ENCODE measurements at regions of chr19 and their contacts with region 1.

Region 1: GRCh38 chr19:10580979-10581631 is 6.0 kb downstream of the AP1M2 start:
- DNase-seq: peak; percentile 73 to 94 (median 88)
- ATAC-seq: peak; percentile 91 to 98 (median 95)
- H3K4me3 ChIP-seq: peak overlapping the region in 1 of 2 donors; percentile 3
- H3K4me3 Mint-ChIP-seq: no peak overlapping the region
- H3K27ac ChIP-seq: no peak overlapping the region
- H3K27ac Mint-ChIP-seq: peak overlapping the region in 1 of 2 donors; percentile 34
- H3K4me1 ChIP-seq: peaks cover 0 to 19% of the 10 kb centered on the region in 2 experiments
- H3K4me1 Mint-ChIP-seq: peaks cover 11 to 14% (median 14%) of the 10 kb centered on the region in 3 donors
- H3K27me3 ChIP-seq: peaks cover 0 to 9% of the 10 kb centered on the region in 2 experiments
- H3K27me3 Mint-ChIP-seq: peaks cover 0 to 1% of the 10 kb centered on the region in 2 donors

Region 2: DNA sequence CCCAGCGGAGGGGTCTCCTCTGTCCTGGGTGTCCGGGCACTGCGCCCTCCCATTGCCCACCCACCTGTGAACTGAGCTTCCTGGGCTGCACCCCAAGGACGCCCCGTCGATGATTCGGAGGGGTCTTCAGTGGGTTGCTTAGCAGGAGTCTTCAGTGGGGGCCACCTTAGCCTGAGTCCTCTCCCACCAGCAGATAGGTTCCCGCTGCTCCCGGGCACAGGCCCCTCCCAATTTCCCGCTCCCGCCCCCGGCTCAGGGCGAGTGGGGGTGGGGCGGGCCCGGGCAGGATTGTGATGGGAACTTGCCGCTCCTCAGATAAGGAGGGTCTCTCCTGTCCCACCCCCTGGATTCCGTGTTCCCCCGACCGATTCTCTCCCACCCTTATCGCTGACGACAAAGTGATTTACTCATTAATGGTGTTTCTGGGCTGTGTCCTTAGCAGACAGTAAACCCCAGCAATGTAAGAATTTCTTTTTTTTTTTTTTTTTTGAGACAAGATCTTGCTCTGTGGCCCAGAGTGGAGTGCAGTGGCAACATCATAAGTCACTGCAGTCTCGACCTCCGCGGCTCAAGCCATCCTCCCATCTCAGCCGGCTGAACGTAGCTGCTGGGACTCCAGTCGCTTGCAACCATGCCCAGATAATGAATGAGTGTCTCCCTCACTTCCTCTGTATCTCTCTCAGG is 63.2 kb before region 1 on chr19:
- CTCF ChIA-PET with region 1: no interaction called
- POLR2A ChIA-PET with region 1: no interaction called
- DNase-seq: peak in 9 of 35 experiments; percentile 24 to 67 (median 29)
- ATAC-seq: peak; percentile 25 to 56 (median 34)
- H3K4me3 ChIP-seq: peak overlapping the region; percentile 56 to 67
- H3K4me3 Mint-ChIP-seq: peak overlapping the region; percentile 71 to 84 (median 72)
- H3K27ac ChIP-seq: peak overlapping the region; percentile 72
- H3K27ac Mint-ChIP-seq: peak overlapping the region in 1 of 2 donors; percentile 66
- H3K4me1 ChIP-seq: peaks cover 17 to 85% of the 10 kb centered on the region in 2 experiments
- H3K4me1 Mint-ChIP-seq: peaks cover 25 to 38% (median 30%) of the 10 kb centered on the region in 3 donors
- H3K27me3 ChIP-seq: peaks cover 14 to 78% of the 10 kb centered on the region in 2 experiments
- H3K27me3 Mint-ChIP-seq: peaks cover 47 to 58% of the 10 kb centered on the region in 2 donors

Region 3: DNA sequence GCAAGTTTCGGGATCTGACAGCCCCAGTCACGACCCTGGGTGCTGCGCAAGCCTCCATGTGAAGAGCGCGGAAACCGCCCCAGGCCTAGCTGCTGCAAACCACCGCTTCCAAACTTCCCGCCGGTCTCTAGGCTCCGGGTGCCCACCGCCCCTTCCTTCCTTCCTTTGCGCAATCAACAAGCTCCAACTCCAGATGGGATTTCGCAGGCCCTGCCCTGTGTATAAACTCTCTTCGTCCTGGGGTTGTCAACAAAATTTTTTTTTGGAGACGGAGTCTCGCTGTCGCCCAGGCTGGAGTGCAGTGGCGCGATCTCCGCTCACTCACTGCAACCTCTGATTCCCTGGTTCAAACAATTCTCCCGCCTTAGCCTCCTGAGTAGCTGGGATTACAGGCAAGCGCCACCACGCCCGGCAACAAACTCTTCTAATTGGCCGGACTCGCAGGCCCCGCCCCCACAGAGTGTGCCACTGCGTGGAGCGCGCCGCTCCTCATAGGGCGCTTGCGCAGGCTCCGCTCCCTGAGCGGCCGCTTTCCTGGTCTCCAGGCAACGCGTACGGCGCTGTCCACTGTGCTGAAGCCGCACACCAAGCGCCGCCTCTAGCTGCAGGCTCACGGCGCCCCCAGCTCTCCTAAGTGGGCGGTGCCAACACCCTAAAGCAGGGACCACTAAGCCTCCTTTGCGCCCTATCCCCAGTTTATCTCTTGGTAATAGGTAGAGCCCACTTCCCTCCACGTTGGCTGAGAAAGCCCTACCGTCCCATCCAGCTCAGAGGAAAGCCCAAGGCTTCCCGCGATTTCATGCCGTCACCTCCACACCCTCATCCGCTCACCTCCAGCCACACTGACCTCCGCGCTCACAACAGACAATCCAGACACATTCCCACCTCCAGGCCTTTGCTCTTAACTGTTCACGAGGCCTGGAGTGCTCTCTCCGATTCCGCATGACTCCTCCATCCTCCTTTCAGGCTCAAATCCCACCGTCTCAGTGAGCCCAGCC is 114.6 kb after region 1 on chr19:
- CTCF ChIA-PET with region 1: interaction called, 9 to 14 read pairs
- POLR2A ChIA-PET with region 1: no interaction called
- DNase-seq: peak; percentile 67 to 93 (median 84)
- ATAC-seq: peak; percentile 90 to 97 (median 96)
- H3K4me3 ChIP-seq: peak overlapping the region; percentile 32 to 52
- H3K4me3 Mint-ChIP-seq: peak overlapping the region; percentile 72 to 84 (median 75)
- H3K27ac ChIP-seq: no peak overlapping the region
- H3K27ac Mint-ChIP-seq: peak overlapping the region; percentile 5 to 56
- H3K4me1 ChIP-seq: peaks cover 2 to 18% of the 10 kb centered on the region in 2 experiments
- H3K4me1 Mint-ChIP-seq: peaks cover 15 to 21% (median 20%) of the 10 kb centered on the region in 3 donors
- H3K27me3 ChIP-seq: peaks cover 0 to 24% of the 10 kb centered on the region in 2 experiments
- H3K27me3 Mint-ChIP-seq: peaks cover 0 to 5% of the 10 kb centered on the region in 2 donors

Region 4: DNA sequence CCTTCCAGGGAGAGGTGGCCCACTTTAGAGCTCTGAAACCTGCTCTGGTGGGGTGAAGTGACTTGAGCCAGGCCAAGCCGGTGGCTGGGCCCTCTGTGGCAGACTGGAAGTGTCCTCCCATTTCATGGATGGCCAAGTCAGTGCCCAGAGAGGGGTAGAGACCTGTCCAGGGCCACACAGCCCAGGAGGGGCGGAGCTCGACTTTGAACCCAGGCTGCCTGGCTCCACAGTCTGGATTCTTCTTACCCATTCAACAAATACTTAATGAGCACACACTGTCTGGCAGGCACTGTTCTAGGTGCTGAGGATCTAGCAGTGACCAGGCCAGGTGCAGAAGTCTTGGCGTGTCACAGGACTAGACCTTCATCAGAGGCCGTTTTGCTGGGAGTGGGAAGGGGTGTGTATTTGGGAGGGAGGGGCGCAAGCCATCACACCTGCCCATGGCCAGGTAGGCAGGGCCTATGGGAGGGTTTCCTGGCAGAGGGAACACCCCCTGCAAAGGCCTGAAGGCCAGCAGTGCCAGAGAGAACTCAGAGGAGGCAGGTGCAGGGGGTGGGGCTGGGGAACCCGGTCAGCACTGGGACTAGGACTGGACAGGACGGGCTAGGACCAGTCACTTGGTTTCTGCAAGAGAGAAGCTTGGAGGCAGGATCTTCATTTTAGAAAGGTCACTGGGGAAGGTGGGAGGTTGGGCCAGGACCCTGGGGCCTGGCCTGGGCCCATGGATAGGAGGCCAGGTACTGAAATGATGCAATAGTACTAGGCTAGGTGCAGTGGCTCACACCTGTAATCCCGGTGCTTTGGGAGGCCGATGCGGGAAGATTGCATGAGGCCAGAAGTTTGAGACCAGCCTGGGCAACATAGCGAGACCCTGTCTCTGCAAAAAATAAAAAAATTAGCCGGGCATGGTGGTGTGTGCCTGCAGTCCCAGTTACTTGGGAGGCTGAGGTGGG is 168.6 kb after region 1 on chr19:
- CTCF ChIA-PET with region 1: interaction called in 1 of 2 experiments, 11 read pairs
- POLR2A ChIA-PET with region 1: no interaction called
- DNase-seq: no peak
- ATAC-seq: no peak
- H3K4me3 ChIP-seq: no peak overlapping the region
- H3K4me3 Mint-ChIP-seq: peak overlapping the region in 1 of 3 donors; percentile 49
- H3K27ac ChIP-seq: no peak overlapping the region
- H3K27ac Mint-ChIP-seq: peak overlapping the region; percentile 81 to 84
- H3K4me1 ChIP-seq: peaks cover 27 to 73% of the 10 kb centered on the region in 2 experiments
- H3K4me1 Mint-ChIP-seq: peaks cover 84 to 93% (median 85%) of the 10 kb centered on the region in 3 donors
- H3K27me3 ChIP-seq: no peaks in the 10 kb centered on the region
- H3K27me3 Mint-ChIP-seq: no peaks in the 10 kb centered on the region

Region 5: DNA sequence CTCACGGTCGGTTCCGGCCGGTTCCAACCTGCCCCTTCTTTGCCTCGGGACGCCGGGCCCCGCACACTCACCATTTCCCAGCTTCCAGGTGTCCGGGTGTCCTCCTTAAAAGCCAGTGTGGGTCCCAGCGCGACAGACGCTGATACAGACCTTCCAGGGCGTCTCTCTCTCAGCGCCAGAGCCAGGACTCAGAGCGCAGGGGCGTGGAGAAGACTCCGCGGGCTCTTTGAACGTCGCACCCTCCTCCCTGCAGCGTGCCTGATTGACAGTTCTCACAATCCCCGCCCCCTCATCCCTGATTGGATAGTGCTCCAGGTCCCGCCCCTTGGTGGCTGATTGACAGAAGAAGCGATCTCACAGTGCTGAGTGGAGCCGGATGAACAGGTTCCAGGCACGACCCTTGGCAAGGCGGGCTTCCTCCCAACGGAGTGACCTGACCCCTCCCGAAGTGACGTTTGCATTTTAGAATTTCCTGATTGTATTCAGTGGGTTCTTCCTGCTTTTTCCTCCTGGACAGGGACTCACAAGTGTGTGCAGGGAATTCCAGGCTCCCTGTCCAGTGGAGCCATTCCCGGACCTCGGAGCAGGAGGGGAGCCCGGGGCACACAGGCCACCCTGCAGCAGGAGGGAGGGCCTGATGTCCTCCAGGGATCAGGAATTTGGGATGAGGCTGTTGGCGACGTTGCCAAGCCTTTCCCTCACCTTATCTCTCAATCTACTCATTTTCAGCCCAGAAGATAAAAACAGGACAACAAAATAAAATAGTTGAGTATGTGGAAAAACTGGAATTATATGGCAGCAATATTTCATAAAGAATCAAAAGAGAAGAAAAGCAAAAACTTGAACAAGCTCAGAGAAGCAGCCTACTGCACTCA is 1157.9 kb after region 1 on chr19 and contains the start of gene ZNF823:
- CTCF ChIA-PET with region 1: no interaction called
- POLR2A ChIA-PET with region 1: interaction called in 1 of 2 experiments, 10 read pairs
- DNase-seq: peak; percentile 91 to 99 (median 95)
- ATAC-seq: peak; percentile 99 to 100 (median 99)
- H3K4me3 ChIP-seq: peak within 1 kb of the TSS; percentile 82 to 88
- H3K4me3 Mint-ChIP-seq: peak within 1 kb of the TSS; percentile 97 to 100 (median 99)
- H3K27ac ChIP-seq: no peak within 1 kb of the TSS
- H3K27ac Mint-ChIP-seq: peak within 1 kb of the TSS; percentile 90 to 92
- H3K4me1 ChIP-seq: peaks cover 7 to 22% of the 10 kb centered on the region in 2 experiments
- H3K4me1 Mint-ChIP-seq: peaks cover 26 to 28% (median 27%) of the 10 kb centered on the region in 3 donors
- H3K27me3 ChIP-seq: no peaks in the 10 kb centered on the region
- H3K27me3 Mint-ChIP-seq: peaks cover 0 to 5% of the 10 kb centered on the region in 2 donors
- total RNA-seq, gene ZNF823: 2.3 to 6.4 (median 4.8) TPM

Measured in T-cell (primary cell).